Posterior vena cava (tissue), 2 donors: ENCODE measurements at regions of chr19 and their contacts with region 1.

Region 1: GRCh38 chr19:4732680-4733114 is 9.1 kb upstream of the DPP9 start:
- DNase-seq: no peak

Region 2: DNA sequence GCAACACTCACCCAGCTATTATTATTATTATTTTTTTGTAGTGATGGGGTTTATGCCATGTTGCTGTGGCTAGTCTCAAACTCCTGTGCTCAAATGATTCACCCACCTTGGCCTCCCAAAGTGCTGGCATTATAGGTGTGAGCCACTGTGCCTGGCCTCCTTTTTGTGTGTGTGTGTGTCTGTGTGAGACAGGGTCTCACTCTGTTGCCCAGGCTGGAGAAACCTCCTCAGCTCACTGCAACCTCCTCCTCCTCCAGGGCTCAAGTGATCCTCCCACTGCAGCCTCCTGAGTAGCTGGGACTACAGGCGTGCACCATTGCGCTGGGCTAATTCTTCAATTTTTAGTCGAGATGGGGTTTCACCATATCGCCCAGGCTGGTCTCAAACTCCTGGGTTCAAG is 59.0 kb before region 1 on chr19:
- intact Hi-C with region 1: no loop called
- DNase-seq: no peak

Region 3: DNA sequence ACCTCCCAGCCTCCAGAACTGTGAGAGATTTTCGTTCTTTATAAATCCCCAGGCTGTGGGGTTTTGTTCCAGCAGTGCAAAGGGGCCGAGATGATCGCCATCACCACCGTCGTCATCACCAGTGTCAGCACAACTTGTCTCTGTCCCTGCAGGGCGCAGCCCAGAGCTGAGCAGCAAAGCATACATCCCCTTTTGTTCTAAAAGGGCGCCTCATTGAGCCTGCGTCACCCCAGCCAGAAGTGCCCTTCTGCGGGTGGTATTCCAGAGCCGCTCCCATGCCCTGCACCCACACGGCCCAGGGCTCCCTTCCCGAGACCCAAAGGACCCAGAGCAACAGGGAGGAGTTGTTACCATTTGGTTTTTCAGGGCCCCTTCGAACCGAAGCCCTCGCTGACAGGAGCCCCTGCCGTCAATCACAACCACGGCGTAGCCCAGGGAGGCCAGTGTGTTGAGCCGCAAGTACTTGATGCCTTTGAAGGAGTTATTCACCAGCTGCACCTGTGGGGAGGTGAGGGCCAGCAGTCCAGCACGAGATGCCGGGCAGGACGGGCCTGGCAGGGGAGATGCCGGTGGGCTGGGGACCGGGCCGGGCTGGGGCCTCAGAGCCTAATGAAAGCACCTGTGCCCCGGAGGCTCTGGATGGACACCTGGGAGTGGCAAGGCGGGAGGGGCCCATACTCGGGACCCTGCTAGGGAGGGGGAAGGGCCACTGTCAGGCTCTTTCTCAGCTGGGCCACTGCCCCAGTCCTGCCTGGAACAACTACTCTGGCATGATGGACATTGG is 48.2 kb before region 1 on chr19:
- intact Hi-C with region 1: no loop called
- DNase-seq: no peak

Region 4: GRCh38 chr19:4791170-4792018 is 58.7 kb after region 1 on chr19 and contains the start of gene FEM1A:
- intact Hi-C with region 1: loop called (anchors 5 kb)
- DNase-seq: peak; percentile 100
- total RNA-seq, gene FEM1A: 7.7 to 9.1 TPM

Region 5: DNA sequence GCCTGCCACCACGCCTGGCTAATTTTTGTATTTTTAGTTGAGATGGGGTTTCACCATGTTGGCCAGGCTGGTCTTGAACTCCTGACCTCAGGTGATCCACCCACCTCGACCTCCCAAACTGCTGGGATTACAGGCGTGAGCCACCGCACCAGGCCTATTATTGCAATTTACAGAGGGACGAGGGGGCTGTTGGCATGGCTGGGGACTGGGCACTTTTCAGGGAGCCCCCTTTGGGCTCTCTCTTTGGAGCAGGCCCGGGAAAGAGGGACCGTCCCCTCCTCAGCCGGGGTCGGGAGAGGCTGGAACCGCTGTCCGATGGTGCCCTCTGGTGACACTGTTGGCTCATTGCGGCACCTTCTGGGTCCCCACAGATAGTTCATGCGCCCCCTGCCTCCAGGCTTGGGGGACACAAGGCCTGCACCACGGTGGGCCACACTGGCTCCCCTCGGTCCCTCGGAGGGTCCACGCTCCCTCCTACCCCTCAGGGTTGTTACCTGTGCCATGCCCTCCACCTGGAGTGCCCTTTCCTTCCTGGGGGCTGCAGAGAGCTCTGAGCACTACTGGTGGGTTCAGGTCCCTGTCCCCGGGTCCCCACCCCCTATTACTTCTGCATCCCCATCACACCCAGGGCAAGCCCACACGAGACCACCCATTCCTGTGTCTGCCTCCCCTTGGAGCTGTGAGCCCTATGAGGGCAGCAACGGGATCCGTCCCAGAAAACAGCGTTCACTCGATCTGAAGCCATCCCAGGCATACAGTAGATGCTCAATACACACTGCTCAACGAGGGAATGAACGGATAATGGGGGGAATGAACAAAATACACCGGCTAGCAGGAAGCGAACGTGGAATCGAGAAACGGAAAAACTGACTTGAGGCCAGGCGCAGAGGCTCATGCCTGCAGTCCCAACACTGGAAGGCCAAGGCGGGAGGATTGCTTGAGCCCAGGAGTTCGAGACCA is 71.3 kb after region 1 on chr19:
- intact Hi-C with region 1: loop called in 1 of 2 experiments (anchors 5 kb)
- DNase-seq: peak; percentile 84

Region 6: DNA sequence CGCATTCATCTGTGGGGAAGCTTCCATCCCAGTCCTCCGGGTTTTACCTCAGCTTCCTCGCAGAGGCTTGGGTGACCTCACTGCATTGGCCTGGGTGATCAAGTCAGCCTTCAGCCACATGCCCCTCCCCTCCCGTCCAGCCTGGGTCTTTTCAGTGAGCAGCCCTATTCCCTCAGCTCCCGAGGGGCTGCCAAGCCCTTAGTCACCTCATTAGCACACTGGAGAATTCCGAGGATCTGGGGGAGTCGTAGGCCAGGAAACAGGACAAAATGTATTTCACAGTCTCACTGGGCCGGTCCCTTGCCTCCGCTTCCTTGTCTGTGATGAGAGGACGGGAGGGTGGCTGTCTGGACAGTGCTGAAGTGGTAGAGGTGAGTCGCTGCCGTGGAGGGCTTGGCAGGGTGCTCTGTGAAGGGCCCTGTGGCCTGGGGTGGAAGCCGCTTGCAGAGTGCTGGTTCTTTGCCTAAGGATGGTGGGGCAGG is 256.1 kb after region 1 on chr19:
- intact Hi-C with region 1: no loop called
- DNase-seq: peak; percentile 92